ENCODE measurements at regions of chr5 and their contacts with region 1.

Region 1: DNA sequence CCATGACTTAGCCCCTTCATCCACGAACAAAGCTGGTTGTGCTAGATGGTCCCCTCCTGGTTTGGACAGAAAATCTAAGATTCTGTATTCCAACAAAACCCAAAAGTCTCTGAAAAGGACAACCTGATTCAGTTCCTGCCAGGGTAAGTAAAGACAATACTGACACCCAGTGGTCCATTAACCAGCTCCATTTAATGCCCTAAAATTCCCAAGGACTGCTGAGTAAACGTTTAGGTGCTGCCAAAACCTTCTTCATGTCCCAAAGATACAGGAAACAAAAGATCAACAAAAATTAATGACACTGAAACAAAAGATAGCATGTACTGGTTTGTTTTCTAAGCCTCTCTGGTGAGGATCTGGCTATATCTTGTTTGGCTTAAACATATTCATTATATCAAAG is 25.3 kb upstream of the PPP1R2B start:
- DNase-seq: peak; percentile 67
- H3K4me3 ChIP-seq: peak overlapping the region; percentile 48
- H3K27ac ChIP-seq: peak overlapping the region; percentile 77
- H3K4me1 ChIP-seq: peaks cover 89% of the 10 kb centered on the region
- CTCF ChIP-seq: peak; percentile 83

Region 2: DNA sequence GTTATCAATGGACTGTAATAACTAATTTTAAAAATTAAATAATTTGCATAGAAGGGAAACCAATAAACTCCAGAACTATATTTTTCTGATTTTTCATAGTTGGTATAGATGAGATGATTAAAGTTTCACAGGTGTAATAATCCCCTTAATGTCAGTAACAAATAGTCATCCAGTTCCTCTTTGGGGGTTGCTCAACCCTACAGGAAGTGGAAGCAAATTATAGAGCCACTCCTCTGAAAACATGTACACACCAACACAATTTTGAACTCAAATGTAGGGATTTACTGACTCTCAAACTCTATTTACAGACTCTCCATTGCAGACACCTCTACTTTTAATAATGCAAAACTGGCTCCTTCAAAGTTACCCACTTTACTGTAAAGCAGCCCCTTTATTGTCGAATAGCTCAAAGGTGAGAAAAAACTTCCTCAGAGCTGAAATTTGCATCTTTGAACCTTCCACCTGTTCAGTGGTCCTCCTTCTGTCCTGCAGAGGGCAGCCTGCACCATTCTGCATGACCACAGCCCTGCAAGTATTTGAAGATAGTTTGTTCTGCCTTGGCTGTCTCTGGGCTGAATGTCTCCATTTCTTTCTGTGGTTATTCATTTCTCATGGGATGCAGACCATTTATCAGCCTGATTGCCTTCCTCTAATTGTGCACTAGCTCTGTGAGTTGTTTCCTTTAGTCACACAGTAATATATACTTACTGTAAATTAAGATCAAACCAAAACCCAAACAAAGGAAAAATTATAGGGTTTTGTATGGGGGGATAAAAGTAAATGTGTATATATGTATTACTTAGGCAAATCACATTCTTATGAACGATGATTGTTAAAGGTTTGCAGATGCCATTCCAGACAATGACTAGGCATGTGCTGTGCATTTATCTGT is 881.0 kb before region 1 on chr5:
- CTCF ChIA-PET with region 1: no interaction called
- POLR2A ChIA-PET with region 1: no interaction called
- intact Hi-C with region 1: loop called (anchors 10 kb)
- DNase-seq: peak; percentile 45
- H3K4me3 ChIP-seq: no peak overlapping the region
- H3K27ac ChIP-seq: no peak overlapping the region
- H3K4me1 ChIP-seq: peaks cover 4% of the 10 kb centered on the region
- CTCF ChIP-seq: peak; percentile 79

Region 3: DNA sequence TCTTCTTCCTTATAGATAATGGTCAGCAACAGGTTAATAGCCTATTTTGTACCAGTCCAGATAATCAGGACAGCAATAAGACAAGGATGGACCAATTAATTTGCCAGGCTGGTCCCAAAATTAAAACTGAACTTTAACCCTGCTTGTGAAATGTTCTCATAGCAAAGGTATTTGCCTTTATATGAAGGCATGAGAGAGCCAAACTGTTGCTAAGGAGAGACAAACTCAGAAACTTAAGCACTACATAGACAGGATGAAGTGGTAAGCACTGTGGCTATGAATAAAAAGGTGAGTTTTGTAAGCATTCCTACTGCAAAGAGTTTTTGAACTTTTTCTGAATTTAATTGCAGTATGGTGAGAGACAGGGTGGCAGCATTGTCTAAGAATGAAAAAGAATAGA is 149.4 kb before region 1 on chr5:
- CTCF ChIA-PET with region 1: no interaction called
- POLR2A ChIA-PET with region 1: no interaction called
- intact Hi-C with region 1: loop called (anchors 5 kb)
- DNase-seq: no peak
- H3K4me3 ChIP-seq: no peak overlapping the region
- H3K27ac ChIP-seq: no peak overlapping the region
- H3K4me1 ChIP-seq: no peaks in the 10 kb centered on the region
- CTCF ChIP-seq: no peak

Region 4: DNA sequence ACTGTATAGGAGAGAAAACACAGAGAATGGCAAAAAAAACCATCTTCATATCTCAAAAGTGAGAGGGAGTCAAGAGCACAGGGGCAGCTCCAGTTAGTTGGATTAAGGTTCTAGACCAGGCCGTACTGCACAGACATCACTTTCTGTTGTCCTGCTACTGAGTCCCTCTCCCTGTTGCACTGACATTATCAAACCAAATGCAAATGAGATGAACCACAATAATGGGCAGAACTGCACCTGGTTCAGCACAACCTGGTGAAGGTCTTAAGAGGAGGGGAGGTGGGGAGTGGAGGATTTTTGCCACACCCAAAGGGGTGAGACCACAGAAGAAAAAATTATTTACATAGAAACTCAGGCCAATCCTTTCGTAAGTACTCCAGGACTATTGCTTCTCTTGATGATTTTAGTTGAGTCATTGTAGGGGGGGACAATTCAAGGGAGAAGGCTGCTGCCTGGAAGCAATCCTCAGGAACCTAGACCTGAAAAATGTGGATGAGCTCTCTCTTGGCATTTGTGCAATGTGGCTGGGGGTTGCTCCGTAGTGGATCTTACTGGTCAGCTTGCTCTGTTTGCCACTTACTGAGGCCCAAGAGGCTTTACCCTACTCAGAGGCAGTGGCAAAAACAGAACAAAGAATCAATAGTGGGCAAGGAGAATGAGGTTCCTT is 69.2 kb before region 1 on chr5:
- CTCF ChIA-PET with region 1: no interaction called
- POLR2A ChIA-PET with region 1: no interaction called
- intact Hi-C with region 1: no loop called
- DNase-seq: peak; percentile 56
- H3K4me3 ChIP-seq: no peak overlapping the region
- H3K27ac ChIP-seq: no peak overlapping the region
- H3K4me1 ChIP-seq: peaks cover 35% of the 10 kb centered on the region
- CTCF ChIP-seq: no peak

Measured in OCI-LY7 (cell line).